ENCODE measurements at regions of chr12 and their contacts with region 1.

Region 1: GRCh38 chr12:87768501-87769287 is 260.5 kb downstream of the C12orf50 start:
- DNase-seq: no peak
- ATAC-seq: no peak
- H3K4me3 ChIP-seq: no peak overlapping the region
- H3K27ac ChIP-seq: no peak overlapping the region
- H3K4me1 ChIP-seq: no peaks in the 10 kb centered on the region
- H3K27me3 ChIP-seq: no peaks in the 10 kb centered on the region
- CTCF ChIP-seq: no peak
- POLR2A ChIP-seq: no peak

Region 2: GRCh38 chr12:87866578-87867292 is 98.0 kb after region 1 on chr12:
- intact Hi-C with region 1: loop called in 1 of 10 experiments (anchors 5 kb)
- DNase-seq: no peak
- ATAC-seq: no peak
- H3K4me3 ChIP-seq: no peak overlapping the region
- H3K27ac ChIP-seq: no peak overlapping the region
- H3K4me1 ChIP-seq: no peaks in the 10 kb centered on the region
- H3K27me3 ChIP-seq: no peaks in the 10 kb centered on the region
- CTCF ChIP-seq: no peak
- POLR2A ChIP-seq: no peak